Right ventricle myocardium inferior (tissue), 1 donor: ENCODE measurements at regions of chr7 and their contacts with region 1.

Region 1: GRCh38 chr7:153473185-153473584 is 579.0 kb upstream of the DPP6 start:
- DNase-seq: no peak
- ATAC-seq: peak; percentile 53

Region 2: GRCh38 chr7:153390955-153391354 is 82.2 kb before region 1 on chr7:
- intact Hi-C with region 1: loop called (anchors 5 kb)
- DNase-seq: no peak
- ATAC-seq: no peak